ENCODE measurements at regions of chr1 and their contacts with region 1.

Region 1: DNA sequence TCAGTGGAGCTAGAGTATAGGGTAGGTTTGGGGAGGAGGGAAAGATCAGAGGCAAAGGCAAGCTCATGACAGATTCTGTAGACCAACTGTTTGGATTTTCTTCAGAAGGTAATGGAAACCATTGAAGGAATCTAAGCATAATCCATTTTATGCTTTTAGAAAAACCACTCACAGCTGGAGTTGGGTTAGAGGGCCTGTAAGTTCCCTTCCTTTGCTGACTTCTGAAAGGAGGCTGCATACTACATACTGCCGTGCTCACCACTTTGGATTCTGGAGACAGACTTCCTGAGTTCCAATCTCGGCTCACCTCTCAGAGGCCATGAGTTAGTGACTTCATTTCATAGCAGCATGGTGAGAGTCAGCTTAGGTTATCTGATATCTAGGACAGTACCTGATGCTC is 6.4 kb upstream of the SYT2 start:
- DNase-seq: no peak
- H3K4me3 ChIP-seq: no peak overlapping the region
- H3K27ac ChIP-seq: no peak overlapping the region
- H3K4me1 ChIP-seq: no peaks in the 10 kb centered on the region
- CTCF ChIP-seq: no peak

Region 2: DNA sequence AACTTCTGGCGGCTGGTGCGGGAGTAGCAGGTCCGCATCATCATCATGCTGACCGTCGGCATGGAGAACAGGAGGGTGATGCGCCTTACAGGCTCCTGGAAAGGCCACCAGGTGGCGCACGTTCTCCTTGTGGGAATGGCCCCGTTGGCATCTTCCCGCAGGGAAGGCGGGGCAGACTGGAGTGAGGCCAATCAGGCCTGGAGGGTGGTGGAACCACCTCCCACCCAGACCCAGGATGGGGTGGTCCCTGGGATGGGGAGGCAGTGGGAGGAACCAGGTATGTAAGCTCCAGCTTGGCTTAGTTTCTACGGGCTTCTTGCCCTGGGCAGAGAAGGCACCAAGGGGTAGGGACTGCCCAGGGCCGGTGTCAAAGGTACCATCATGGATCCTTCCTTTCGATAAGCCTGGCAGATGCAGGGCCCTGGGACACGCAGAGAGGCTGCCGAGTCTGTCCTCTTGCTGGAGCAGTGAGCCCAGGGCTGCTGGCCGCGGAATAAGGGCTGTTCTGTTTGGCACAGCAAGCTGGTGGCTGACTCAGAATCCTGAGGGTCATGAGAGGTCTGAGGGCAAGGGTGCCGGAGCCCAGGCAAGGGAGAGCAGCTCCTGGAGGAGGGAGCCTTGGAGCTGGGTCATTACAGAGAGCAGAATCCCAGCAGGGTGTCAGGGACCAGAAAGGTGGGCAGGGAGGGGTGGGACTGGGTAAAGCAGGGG is 531.7 kb before region 1 on chr1:
- CTCF ChIA-PET with region 1: interaction called, 3 read pairs
- POLR2A ChIA-PET with region 1: no interaction called
- intact Hi-C with region 1: loop called (anchors 5 kb)
- DNase-seq: peak; percentile 68
- H3K4me3 ChIP-seq: no peak overlapping the region
- H3K27ac ChIP-seq: no peak overlapping the region
- H3K4me1 ChIP-seq: no peaks in the 10 kb centered on the region
- CTCF ChIP-seq: peak; percentile 83

Region 3: GRCh38 chr1:202505356-202505755 is 211.3 kb before region 1 on chr1:
- CTCF ChIA-PET with region 1: no interaction called
- POLR2A ChIA-PET with region 1: no interaction called
- intact Hi-C with region 1: no loop called
- DNase-seq: no peak
- H3K4me3 ChIP-seq: no peak overlapping the region
- H3K27ac ChIP-seq: no peak overlapping the region
- H3K4me1 ChIP-seq: no peaks in the 10 kb centered on the region
- CTCF ChIP-seq: no peak

Measured in OCI-LY7 (cell line).